Tibial artery (tissue), 4 donors: ENCODE measurements at regions of chr3 and their contacts with region 1.

Region 1: GRCh38 chr3:148943506-148944205 is 47.7 kb upstream of the GYG1 start:
- DNase-seq: no peak
- H3K4me3 ChIP-seq: no peak overlapping the region
- H3K27ac ChIP-seq: no peak overlapping the region
- H3K4me1 ChIP-seq: peaks cover 0 to 4% (median 0%) of the 10 kb centered on the region in 4 donors
- H3K27me3 ChIP-seq: no peaks in the 10 kb centered on the region
- CTCF ChIP-seq: peak; percentile 49 to 59

Region 2: GRCh38 chr3:148379763-148380382 is 563.8 kb before region 1 on chr3:
- intact Hi-C with region 1: loop called (anchors 10 kb)
- DNase-seq: no peak
- H3K4me3 ChIP-seq: no peak overlapping the region
- H3K27ac ChIP-seq: no peak overlapping the region
- H3K4me1 ChIP-seq: no peaks in the 10 kb centered on the region
- H3K27me3 ChIP-seq: no peaks in the 10 kb centered on the region
- CTCF ChIP-seq: peak; percentile 59 to 69

Region 3: GRCh38 chr3:148420242-148420641 is 523.4 kb before region 1 on chr3:
- intact Hi-C with region 1: no loop called
- DNase-seq: no peak
- H3K4me3 ChIP-seq: no peak overlapping the region
- H3K27ac ChIP-seq: no peak overlapping the region
- H3K4me1 ChIP-seq: no peaks in the 10 kb centered on the region
- H3K27me3 ChIP-seq: no peaks in the 10 kb centered on the region
- CTCF ChIP-seq: no peak

Region 4: GRCh38 chr3:148477375-148477774 is 466.3 kb before region 1 on chr3:
- intact Hi-C with region 1: no loop called
- DNase-seq: no peak
- H3K4me3 ChIP-seq: no peak overlapping the region
- H3K27ac ChIP-seq: no peak overlapping the region
- H3K4me1 ChIP-seq: no peaks in the 10 kb centered on the region
- H3K27me3 ChIP-seq: no peaks in the 10 kb centered on the region
- CTCF ChIP-seq: no peak

Region 5: DNA sequence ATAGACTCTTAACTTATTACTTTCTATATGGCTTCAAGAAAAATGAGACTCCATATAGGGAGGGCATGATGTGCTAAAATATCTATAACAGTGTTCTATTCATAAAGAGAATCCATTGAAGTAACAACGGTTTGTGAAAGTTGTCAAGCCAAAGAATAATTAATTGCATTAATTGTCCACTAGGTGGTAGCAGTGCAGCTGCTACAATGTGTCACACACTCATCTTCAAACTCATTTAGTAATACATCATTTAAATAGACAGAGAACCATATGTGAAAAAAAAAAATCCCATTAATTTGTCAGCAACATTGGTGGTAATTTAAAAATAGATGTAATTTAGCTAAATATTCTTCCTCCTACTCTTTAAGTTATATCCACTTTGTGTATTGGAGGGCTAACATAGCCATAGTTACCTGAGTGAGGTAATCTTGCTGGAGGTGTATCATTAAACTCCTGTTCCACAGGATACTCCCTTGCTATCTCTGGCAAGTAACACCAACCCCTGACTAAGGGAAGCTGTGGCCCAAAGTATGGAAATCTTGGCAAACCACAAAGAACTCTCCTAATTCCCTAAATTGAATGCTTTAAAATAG is 82.3 kb before region 1 on chr3:
- intact Hi-C with region 1: loop called (anchors 5 kb)
- DNase-seq: no peak
- H3K4me3 ChIP-seq: no peak overlapping the region
- H3K27ac ChIP-seq: no peak overlapping the region
- H3K4me1 ChIP-seq: no peaks in the 10 kb centered on the region
- H3K27me3 ChIP-seq: no peaks in the 10 kb centered on the region
- CTCF ChIP-seq: peak; percentile 72 to 81